B cell (primary cell): ENCODE measurements at regions of chrX and their contacts with region 1.

Region 1: GRCh38 chrX:79138658-79139241 is 5.7 kb upstream of the GPR174 start:
- DNase-seq: peak; percentile 80
- ATAC-seq: peak; percentile 89
- H3K4me3 ChIP-seq: peak overlapping the region in 1 of 5 experiments; percentile 11
- H3K4me3 Mint-ChIP-seq: peak overlapping the region; percentile 70
- H3K27ac ChIP-seq: peak overlapping the region; percentile 71 to 78
- H3K27ac Mint-ChIP-seq: peak overlapping the region; percentile 92
- H3K4me1 ChIP-seq: peaks cover 36 to 44% of the 10 kb centered on the region in 2 donors
- H3K4me1 Mint-ChIP-seq: peaks cover 51% of the 10 kb centered on the region
- H3K27me3 ChIP-seq: no peaks in the 10 kb centered on the region
- H3K27me3 Mint-ChIP-seq: no peaks in the 10 kb centered on the region
- CTCF ChIP-seq: no peak

Region 2: DNA sequence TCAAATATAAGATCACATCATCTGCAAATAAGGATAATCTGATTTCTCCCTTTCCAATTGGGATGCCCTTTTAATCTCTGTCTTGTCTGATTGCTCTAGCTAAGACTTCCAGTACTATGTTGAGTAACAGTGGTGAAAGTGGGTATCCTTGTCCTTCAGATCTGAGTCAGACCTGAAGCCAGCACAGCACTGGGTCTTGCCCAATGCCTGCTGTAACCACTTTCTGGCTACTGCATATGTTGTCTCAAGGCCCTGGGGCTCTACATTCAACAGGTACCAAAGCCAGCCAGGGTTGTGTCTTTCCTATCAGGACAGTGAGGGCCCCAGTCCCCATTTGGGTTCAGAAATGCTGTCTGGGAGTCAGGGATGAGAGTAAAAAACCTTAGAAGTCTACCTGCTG is 901.6 kb before region 1 on chrX:
- CTCF ChIA-PET with region 1: no interaction called
- POLR2A ChIA-PET with region 1: no interaction called
- intact Hi-C with region 1: no loop called
- DNase-seq: no peak
- ATAC-seq: no peak
- H3K4me3 ChIP-seq: no peak overlapping the region
- H3K4me3 Mint-ChIP-seq: no peak overlapping the region
- H3K27ac ChIP-seq: no peak overlapping the region
- H3K27ac Mint-ChIP-seq: no peak overlapping the region
- H3K4me1 ChIP-seq: no peaks in the 10 kb centered on the region
- H3K4me1 Mint-ChIP-seq: no peaks in the 10 kb centered on the region
- H3K27me3 ChIP-seq: no peaks in the 10 kb centered on the region
- H3K27me3 Mint-ChIP-seq: no peaks in the 10 kb centered on the region
- CTCF ChIP-seq: no peak

Region 3: DNA sequence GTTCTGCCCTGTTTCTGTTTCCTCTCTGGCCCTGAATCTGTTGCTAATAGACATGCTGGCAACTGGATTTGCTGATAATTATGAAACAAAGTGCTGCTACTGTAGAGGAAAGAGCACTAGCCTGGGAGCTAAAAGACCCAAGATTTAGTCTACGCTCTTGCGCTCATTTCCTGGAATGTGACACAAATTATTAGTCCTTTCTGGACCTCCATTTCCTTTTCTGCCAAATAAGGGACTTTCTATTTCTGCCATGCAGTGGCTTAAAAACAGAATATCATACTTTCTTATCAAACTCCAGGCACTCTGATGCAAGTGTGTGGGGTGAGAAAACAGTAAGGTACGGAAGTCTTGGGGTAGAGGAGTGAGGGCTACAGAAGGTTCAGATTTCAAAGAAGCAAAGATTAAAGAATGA is 42.6 kb before region 1 on chrX:
- CTCF ChIA-PET with region 1: no interaction called
- POLR2A ChIA-PET with region 1: no interaction called
- intact Hi-C with region 1: loop called (anchors 5 kb)
- DNase-seq: no peak
- ATAC-seq: no peak
- H3K4me3 ChIP-seq: no peak overlapping the region
- H3K4me3 Mint-ChIP-seq: peak overlapping the region; percentile 34
- H3K27ac ChIP-seq: peak overlapping the region; percentile 12 to 44
- H3K27ac Mint-ChIP-seq: peak overlapping the region; percentile 75
- H3K4me1 ChIP-seq: peaks cover 13 to 17% of the 10 kb centered on the region in 2 donors
- H3K4me1 Mint-ChIP-seq: peaks cover 45% of the 10 kb centered on the region
- H3K27me3 ChIP-seq: no peaks in the 10 kb centered on the region
- H3K27me3 Mint-ChIP-seq: no peaks in the 10 kb centered on the region
- CTCF ChIP-seq: no peak

Region 4: GRCh38 chrX:79107891-79108718 is 30.6 kb before region 1 on chrX:
- CTCF ChIA-PET with region 1: interaction called, 4 read pairs
- POLR2A ChIA-PET with region 1: interaction called, 3 read pairs
- intact Hi-C with region 1: loop called (anchors 2 kb)
- DNase-seq: peak; percentile 73
- ATAC-seq: peak; percentile 86
- H3K4me3 ChIP-seq: peak overlapping the region in 3 of 5 experiments; percentile 16 to 43 (median 19)
- H3K4me3 Mint-ChIP-seq: peak overlapping the region; percentile 80
- H3K27ac ChIP-seq: peak overlapping the region; percentile 91 to 98
- H3K27ac Mint-ChIP-seq: peak overlapping the region; percentile 97
- H3K4me1 ChIP-seq: peaks cover 36 to 47% of the 10 kb centered on the region in 2 donors
- H3K4me1 Mint-ChIP-seq: peaks cover 43% of the 10 kb centered on the region
- H3K27me3 ChIP-seq: no peaks in the 10 kb centered on the region
- H3K27me3 Mint-ChIP-seq: no peaks in the 10 kb centered on the region
- CTCF ChIP-seq: no peak

Region 5: GRCh38 chrX:79161655-79162054 is 22.9 kb after region 1 on chrX:
- CTCF ChIA-PET with region 1: no interaction called
- POLR2A ChIA-PET with region 1: no interaction called
- intact Hi-C with region 1: loop called (anchors 1 kb)
- DNase-seq: peak; percentile 71
- ATAC-seq: peak; percentile 89
- H3K4me3 ChIP-seq: peak overlapping the region in 3 of 5 experiments; percentile 22 to 41 (median 31)
- H3K4me3 Mint-ChIP-seq: peak overlapping the region; percentile 87
- H3K27ac ChIP-seq: peak overlapping the region; percentile 79 to 84
- H3K27ac Mint-ChIP-seq: peak overlapping the region; percentile 89
- H3K4me1 ChIP-seq: peaks cover 39 to 43% of the 10 kb centered on the region in 2 donors
- H3K4me1 Mint-ChIP-seq: peaks cover 64% of the 10 kb centered on the region
- H3K27me3 ChIP-seq: no peaks in the 10 kb centered on the region
- H3K27me3 Mint-ChIP-seq: no peaks in the 10 kb centered on the region
- CTCF ChIP-seq: no peak

Region 6: DNA sequence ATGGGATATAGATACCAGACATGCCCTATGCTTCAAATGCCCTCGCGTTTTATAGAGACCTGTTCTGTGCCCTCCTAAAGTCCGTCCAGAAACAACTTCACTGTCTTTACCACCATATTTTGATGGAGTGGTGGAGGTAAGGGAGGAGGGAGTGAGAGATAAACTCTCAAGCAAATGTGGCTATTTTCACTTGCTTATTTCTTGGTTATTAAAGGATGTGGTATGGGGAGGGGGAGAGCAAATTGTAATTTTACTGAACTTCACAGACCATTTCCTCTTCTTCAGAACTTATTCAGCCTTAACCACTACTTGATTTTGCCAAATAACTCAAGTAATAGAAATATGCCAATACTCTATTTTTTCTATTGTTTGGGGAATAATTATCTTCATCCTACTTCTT is 37.3 kb after region 1 on chrX:
- CTCF ChIA-PET with region 1: no interaction called
- POLR2A ChIA-PET with region 1: no interaction called
- intact Hi-C with region 1: loop called (anchors 5 kb)
- DNase-seq: peak; percentile 25
- ATAC-seq: peak; percentile 31
- H3K4me3 ChIP-seq: peak overlapping the region in 1 of 5 experiments; percentile 14
- H3K4me3 Mint-ChIP-seq: peak overlapping the region; percentile 59
- H3K27ac ChIP-seq: peak overlapping the region; percentile 52 to 70
- H3K27ac Mint-ChIP-seq: peak overlapping the region; percentile 82
- H3K4me1 ChIP-seq: peaks cover 29 to 30% of the 10 kb centered on the region in 2 donors
- H3K4me1 Mint-ChIP-seq: peaks cover 68% of the 10 kb centered on the region
- H3K27me3 ChIP-seq: no peaks in the 10 kb centered on the region
- H3K27me3 Mint-ChIP-seq: no peaks in the 10 kb centered on the region
- CTCF ChIP-seq: no peak

Region 7: DNA sequence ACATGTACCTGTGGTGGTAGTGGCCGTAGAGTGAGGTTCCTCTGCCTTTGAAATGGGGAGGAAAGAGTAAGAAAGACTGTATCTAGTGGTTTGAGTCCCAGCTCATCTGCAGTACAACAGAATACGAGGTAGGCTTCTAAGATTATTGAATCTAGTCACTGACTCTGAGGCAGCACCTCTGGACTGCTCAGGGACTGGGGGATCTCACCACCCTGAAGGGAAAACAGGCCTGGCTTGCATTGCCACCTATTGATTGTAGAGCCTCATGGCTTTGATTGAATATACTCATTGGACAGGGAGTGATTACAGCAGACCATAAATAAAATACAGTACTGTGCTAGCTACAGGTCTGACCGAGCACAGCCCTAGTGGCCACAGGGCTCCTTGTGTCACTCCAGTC is 56.3 kb after region 1 on chrX:
- CTCF ChIA-PET with region 1: no interaction called
- POLR2A ChIA-PET with region 1: no interaction called
- intact Hi-C with region 1: no loop called
- DNase-seq: no peak
- ATAC-seq: no peak
- H3K4me3 ChIP-seq: no peak overlapping the region
- H3K4me3 Mint-ChIP-seq: no peak overlapping the region
- H3K27ac ChIP-seq: no peak overlapping the region
- H3K27ac Mint-ChIP-seq: no peak overlapping the region
- H3K4me1 ChIP-seq: peaks cover 0 to 2% of the 10 kb centered on the region in 2 donors
- H3K4me1 Mint-ChIP-seq: peaks cover 3% of the 10 kb centered on the region
- H3K27me3 ChIP-seq: no peaks in the 10 kb centered on the region
- H3K27me3 Mint-ChIP-seq: no peaks in the 10 kb centered on the region
- CTCF ChIP-seq: no peak